Activated B cell treated with CpG ODN at 0.5 μM for 24 hours (primary cell): ENCODE measurements at regions of chr6 and their contacts with region 1.

Region 1: GRCh38 chr6:117482240-117483003 is at the start of gene DCBLD1:
- DNase-seq: peak; percentile 50
- ATAC-seq: peak; percentile 89
- H3K4me3 Mint-ChIP-seq: peak within 1 kb of the TSS; percentile 79
- H3K27ac Mint-ChIP-seq: no peak within 1 kb of the TSS
- H3K4me1 Mint-ChIP-seq: peaks cover 17% of the 10 kb centered on the region
- H3K27me3 Mint-ChIP-seq: peaks cover 42% of the 10 kb centered on the region
- CTCF ChIP-seq: no peak
- total RNA-seq, gene DCBLD1: 0.15 and 0.31 TPM in 2 replicates

Region 2: GRCh38 chr6:117674991-117675657 is 192.7 kb after region 1 on chr6 and contains the start of gene NUS1:
- CTCF ChIA-PET with region 1: no interaction called
- POLR2A ChIA-PET with region 1: no interaction called
- intact Hi-C with region 1: loop called (anchors 2 kb)
- DNase-seq: peak; percentile 97
- ATAC-seq: peak; percentile 98
- H3K4me3 Mint-ChIP-seq: peak within 1 kb of the TSS; percentile 95
- H3K27ac Mint-ChIP-seq: peak within 1 kb of the TSS; percentile 89
- H3K4me1 Mint-ChIP-seq: peaks cover 42% of the 10 kb centered on the region
- H3K27me3 Mint-ChIP-seq: no peaks in the 10 kb centered on the region
- CTCF ChIP-seq: no peak
- total RNA-seq, gene NUS1: 29.1 and 30.6 TPM in 2 replicates

Region 3: GRCh38 chr6:117976030-117976651 is 493.7 kb after region 1 on chr6:
- CTCF ChIA-PET with region 1: no interaction called
- POLR2A ChIA-PET with region 1: no interaction called
- intact Hi-C with region 1: no loop called
- DNase-seq: no peak
- ATAC-seq: no peak
- H3K4me3 Mint-ChIP-seq: no peak overlapping the region
- H3K27ac Mint-ChIP-seq: no peak overlapping the region
- H3K4me1 Mint-ChIP-seq: no peaks in the 10 kb centered on the region
- H3K27me3 Mint-ChIP-seq: no peaks in the 10 kb centered on the region
- CTCF ChIP-seq: peak; percentile 23